Psoas muscle (tissue), 8 donors: ENCODE measurements at regions of chr13 and their contacts with region 1.

Region 1: DNA sequence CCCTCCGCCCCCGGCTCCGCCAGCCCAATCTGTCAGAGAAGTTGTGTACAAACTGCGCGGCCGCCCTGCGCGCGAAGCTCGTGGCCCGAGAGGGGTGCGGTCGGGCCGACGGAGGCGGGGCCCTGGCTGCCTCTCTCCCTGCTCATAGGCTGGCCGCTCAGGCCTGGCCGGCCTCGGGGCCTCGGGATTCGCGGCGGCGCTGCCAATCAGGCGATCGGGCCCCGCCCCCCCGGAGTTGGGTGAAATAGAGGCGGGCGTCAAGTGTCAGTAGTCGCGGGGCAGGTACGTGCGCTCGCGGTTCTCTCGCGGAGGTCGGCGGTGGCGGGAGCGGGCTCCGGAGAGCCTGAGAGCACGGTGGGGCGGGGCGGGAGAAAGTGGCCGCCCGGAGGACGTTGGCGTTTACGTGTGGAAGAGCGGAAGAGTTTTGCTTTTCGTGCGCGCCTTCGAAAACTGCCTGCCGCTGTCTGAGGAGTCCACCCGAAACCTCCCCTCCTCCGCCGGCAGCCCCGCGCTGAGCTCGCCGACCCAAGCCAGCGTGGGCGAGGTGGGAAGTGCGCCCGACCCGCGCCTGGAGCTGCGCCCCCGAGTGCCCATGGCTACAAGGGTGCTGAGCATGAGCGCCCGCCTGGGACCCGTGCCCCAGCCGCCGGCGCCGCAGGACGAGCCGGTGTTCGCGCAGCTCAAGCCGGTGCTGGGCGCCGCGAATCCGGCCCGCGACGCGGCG is at the start of gene KLF5:
- DNase-seq: peak; percentile 97 to 98
- ATAC-seq: peak; percentile 93 to 98 (median 96)
- H3K4me3 ChIP-seq: peak within 1 kb of the TSS; percentile 76
- H3K27ac ChIP-seq: peak within 1 kb of the TSS; percentile 74
- H3K4me1 ChIP-seq: peaks cover 16% of the 10 kb centered on the region
- H3K27me3 ChIP-seq: no peaks in the 10 kb centered on the region
- CTCF ChIP-seq: no peak
- total RNA-seq, gene KLF5: 8.0 to 48.2 (median 9.8) TPM

Region 2: GRCh38 chr13:72521940-72522661 is 536.8 kb before region 1 on chr13:
- intact Hi-C with region 1: no loop called
- DNase-seq: no peak
- ATAC-seq: no peak
- H3K4me3 ChIP-seq: no peak overlapping the region
- H3K27ac ChIP-seq: no peak overlapping the region
- H3K4me1 ChIP-seq: no peaks in the 10 kb centered on the region
- H3K27me3 ChIP-seq: no peaks in the 10 kb centered on the region
- CTCF ChIP-seq: no peak

Region 3: DNA sequence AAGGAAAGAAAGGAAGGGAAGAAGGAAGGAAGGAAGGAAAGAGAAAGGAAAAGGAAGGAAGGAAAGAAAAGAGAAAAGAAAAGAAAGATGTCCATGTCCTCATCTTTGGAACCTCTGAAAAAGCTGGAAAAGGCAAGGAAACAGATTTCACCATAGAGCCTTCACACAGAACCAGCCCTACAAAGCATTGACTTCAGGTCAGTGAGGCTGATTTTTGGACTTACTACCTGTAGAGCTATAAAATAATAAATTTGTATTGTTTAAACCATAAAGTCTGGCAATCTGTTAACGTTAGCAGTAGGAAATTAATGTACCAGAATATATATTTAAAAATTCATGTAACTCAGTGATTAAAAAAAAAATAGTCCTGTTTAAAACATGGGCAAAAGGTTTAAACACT is 146.9 kb before region 1 on chr13:
- intact Hi-C with region 1: loop called in 1 of 2 experiments (anchors 10 kb)
- DNase-seq: no peak
- ATAC-seq: no peak
- H3K4me3 ChIP-seq: no peak overlapping the region
- H3K27ac ChIP-seq: no peak overlapping the region
- H3K4me1 ChIP-seq: no peaks in the 10 kb centered on the region
- H3K27me3 ChIP-seq: no peaks in the 10 kb centered on the region
- CTCF ChIP-seq: no peak

Region 4: DNA sequence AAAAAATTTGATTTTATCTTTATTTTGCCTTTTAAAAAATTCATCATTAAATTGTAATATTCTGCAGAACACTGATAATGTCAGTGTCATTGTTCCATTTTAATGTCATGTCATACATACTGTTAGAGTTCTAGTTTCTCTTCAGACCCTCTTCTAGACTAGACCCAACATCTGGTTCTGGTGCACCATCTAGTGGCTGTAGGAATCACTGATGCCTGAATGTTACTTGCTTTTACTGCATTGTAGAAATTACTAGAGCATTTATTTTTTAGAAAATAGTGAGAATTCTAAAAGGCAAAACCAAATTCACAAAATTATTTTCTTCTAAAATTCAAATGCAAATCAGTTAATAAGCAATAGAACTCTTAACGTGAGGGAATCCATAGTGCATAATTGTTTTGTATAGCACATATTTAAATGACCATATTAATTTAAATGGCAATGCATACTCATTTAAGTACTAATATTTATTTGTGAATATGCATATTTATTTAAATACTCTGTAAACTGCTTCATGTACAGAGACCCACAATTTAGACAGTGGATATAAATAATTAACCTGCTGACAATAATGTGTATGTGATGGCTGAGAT is 649.6 kb after region 1 on chr13:
- intact Hi-C with region 1: loop called (anchors 5 kb)
- DNase-seq: no peak
- ATAC-seq: peak; percentile 51 to 97 (median 78)
- H3K4me3 ChIP-seq: no peak overlapping the region
- H3K27ac ChIP-seq: no peak overlapping the region
- H3K4me1 ChIP-seq: no peaks in the 10 kb centered on the region
- H3K27me3 ChIP-seq: no peaks in the 10 kb centered on the region
- CTCF ChIP-seq: peak; percentile 74